A549 (cell line): ENCODE measurements at regions of chr9 and their contacts with region 1.

Region 1: DNA sequence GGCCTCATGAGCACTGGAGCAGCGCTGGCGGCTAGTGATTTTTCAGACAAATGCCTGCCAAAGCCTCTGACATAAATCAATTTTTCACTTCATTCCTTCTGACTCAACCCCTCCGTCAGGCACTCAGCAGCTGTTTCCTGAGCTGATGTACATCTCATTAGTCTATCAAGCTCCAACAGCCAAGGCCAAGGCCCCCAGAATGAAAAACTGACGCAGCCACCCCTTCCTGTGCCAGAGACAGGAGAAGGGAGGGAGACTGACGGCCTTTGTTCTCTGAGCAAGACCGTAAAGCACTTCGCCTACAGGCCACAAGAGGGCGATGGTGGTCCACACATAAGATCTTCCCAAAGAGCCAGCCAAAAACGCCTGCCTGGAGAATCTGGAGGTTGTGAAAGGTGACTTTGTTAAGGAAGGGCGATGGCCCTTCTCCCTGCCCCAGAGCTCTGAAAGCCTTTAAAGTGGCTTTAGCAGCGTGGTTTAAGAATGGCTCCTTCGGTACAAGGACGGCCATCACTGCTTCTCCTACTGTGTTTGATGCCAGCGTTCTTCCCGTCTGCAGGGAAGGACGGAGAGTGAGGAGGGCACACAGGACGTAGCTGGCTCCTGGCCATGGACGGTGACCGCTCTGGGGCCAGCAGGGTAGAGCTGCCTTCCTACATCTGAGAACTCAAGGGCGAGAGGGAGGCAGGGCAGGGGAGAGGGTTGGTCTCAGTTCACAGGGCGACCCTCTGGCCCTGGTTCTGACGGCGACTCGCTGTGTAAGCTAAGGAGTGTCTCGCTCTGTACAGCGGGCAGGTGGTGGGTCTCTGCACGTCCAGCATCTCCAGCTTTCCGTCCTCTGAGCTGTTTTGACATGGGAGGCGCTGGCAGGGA is 37.0 kb downstream of the ALG2 start:
- DNase-seq: peak; percentile 78 to 84
- ATAC-seq: peak; percentile 84 to 96
- H3K4me3 ChIP-seq: peak overlapping the region; percentile 34; the same call in 2 of the 3 replicates
- H3K27ac ChIP-seq: peak overlapping the region in 1 of 2 experiments; percentile 35; a peak in 1 of 6 replicates
- H3K4me1 ChIP-seq: no peaks in the 10 kb centered on the region
- CTCF ChIP-seq: peak; percentile 89
- EP300 ChIP-seq: no peak
- POLR2A ChIP-seq: no peak
- RAD21 ChIP-seq: peak; percentile 90 to 93

Region 2: GRCh38 chr9:99162759-99163364 is 21.8 kb before region 1 on chr9:
- CTCF ChIA-PET with region 1: interaction called, 23 read pairs
- POLR2A ChIA-PET with region 1: no interaction called
- DNase-seq: peak; percentile 14 to 42
- ATAC-seq: peak in 1 of 2 experiments; percentile 42; a peak in 3 of 6 replicates
- H3K4me3 ChIP-seq: no peak overlapping the region
- H3K27ac ChIP-seq: no peak overlapping the region
- H3K4me1 ChIP-seq: peaks cover 7% of the 10 kb centered on the region; the same call in 1 of the 3 replicates
- CTCF ChIP-seq: peak; percentile 84
- EP300 ChIP-seq: no peak
- POLR2A ChIP-seq: no peak
- RAD21 ChIP-seq: peak; percentile 77 to 79

Region 3: GRCh38 chr9:99173570-99174504 is 10.9 kb before region 1 on chr9:
- CTCF ChIA-PET with region 1: interaction called, 59 read pairs
- POLR2A ChIA-PET with region 1: no interaction called
- DNase-seq: no peak
- ATAC-seq: no peak
- H3K4me3 ChIP-seq: no peak overlapping the region
- H3K27ac ChIP-seq: no peak overlapping the region
- H3K4me1 ChIP-seq: no peaks in the 10 kb centered on the region
- CTCF ChIP-seq: no peak
- EP300 ChIP-seq: no peak
- POLR2A ChIP-seq: no peak
- RAD21 ChIP-seq: no peak

Region 4: DNA sequence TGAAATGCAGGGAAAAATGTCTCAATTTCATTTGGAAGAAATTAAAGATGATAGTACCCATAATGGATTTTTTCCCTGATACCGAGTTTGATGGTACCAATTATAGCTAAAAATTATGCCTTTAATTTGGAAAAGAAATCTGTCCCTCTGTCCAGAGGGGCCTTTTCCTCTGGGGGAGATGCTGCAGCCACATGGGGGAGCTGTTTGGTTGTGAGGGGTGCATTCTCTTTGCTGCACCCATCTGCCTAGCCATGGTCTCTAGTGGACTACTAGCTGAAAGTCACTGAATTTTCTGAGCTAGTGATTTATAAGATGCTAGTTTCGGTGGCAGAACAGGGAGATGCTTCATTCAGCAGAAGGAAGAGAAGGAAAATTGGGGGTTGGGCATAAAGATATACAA is 47.0 kb after region 1 on chr9:
- CTCF ChIA-PET with region 1: interaction called, 13 read pairs
- POLR2A ChIA-PET with region 1: no interaction called
- DNase-seq: peak; percentile 7 to 18
- ATAC-seq: peak; percentile 77 to 84
- H3K4me3 ChIP-seq: no peak overlapping the region
- H3K27ac ChIP-seq: no peak overlapping the region
- H3K4me1 ChIP-seq: no peaks in the 10 kb centered on the region
- CTCF ChIP-seq: peak; percentile 45
- EP300 ChIP-seq: no peak
- POLR2A ChIP-seq: no peak
- RAD21 ChIP-seq: peak in 1 of 2 experiments; percentile 27; a peak in 1 of 5 replicates

Region 5: DNA sequence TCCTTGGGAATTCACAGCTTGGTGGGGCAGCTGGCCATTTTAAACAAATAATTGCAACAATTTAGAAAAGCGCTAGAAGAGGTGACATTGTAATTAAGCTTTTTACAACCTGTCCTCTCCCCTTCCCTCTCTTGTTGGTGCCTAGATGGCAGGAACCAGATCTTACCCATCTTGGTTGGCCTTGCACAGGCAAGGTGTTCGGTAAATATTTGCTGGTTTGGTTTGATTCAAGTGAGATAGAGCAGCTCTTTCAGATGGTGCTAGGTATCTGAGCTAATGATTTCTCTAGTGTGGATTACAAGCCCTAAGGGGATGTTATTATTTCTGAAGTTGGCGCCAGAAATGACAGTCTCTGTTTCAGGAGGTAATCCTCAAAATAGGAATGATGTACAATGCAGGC is 196.7 kb after region 1 on chr9:
- CTCF ChIA-PET with region 1: no interaction called
- POLR2A ChIA-PET with region 1: no interaction called
- DNase-seq: no peak
- ATAC-seq: no peak
- H3K4me3 ChIP-seq: no peak overlapping the region
- H3K27ac ChIP-seq: no peak overlapping the region
- H3K4me1 ChIP-seq: no peaks in the 10 kb centered on the region
- CTCF ChIP-seq: no peak
- EP300 ChIP-seq: no peak
- POLR2A ChIP-seq: no peak
- RAD21 ChIP-seq: no peak

Region 6: DNA sequence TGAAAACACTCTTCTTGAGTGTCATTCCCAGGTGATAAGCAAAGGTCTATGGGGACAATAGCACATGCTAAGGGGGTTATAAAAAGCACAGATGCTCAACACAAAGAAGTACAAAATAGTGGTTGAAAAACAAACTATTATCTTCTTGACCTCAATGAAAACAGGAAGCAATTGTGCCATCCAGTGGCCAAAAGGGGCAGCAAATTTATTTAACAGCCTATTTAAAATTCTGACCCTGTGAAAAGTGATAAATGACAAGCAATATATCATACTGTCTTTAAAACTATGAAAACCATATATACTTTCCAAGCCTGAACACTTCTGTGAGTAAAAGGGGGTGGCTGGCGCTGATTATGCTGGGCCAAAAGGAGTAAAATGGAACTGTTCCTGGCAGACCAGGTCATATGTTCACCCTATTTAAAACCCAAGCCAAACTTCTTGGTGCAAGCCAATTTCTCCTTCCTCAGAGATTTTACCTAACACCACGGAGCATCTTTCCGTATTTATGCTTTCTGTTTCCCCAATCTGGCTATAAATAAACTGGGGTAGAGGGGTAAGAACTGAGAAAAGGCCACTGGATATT is 1138.3 kb after region 1 on chr9:
- CTCF ChIA-PET with region 1: interaction called, 31 read pairs
- POLR2A ChIA-PET with region 1: no interaction called
- DNase-seq: peak; percentile 18 to 52
- ATAC-seq: peak; percentile 65 to 71; a peak in 5 of 6 replicates
- H3K4me3 ChIP-seq: no peak overlapping the region
- H3K27ac ChIP-seq: no peak overlapping the region
- H3K4me1 ChIP-seq: no peaks in the 10 kb centered on the region
- CTCF ChIP-seq: peak; percentile 72
- EP300 ChIP-seq: no peak
- POLR2A ChIP-seq: no peak
- RAD21 ChIP-seq: peak; percentile 47 to 58